ENCODE measurements at regions of chr2 and their contacts with region 1.

Region 1: GRCh38 chr2:135863233-135863632 is 13.0 kb downstream of the MCM6 start:
- DNase-seq: no peak
- H3K4me3 ChIP-seq: no peak overlapping the region
- H3K27ac ChIP-seq: no peak overlapping the region
- H3K4me1 ChIP-seq: no peaks in the 10 kb centered on the region
- CTCF ChIP-seq: no peak

Region 2: DNA sequence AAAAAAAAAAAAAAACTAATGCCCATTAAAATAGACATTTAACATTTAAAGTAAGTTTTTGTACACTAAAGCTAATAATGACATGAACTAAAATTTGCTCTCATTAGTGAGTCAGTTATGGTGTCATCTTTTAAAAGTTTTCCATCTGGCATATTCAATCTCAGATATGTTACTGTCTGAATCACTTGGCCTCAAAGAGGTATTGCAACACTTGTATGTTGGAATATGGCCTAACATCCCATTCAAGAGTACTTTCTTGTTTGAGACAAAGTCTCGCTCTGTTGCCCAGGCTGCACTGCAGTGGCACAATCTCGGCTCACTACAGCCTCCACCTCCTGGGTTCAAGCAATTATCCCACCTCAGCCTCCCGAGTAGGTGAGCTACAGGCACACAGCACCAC is 1314.1 kb before region 1 on chr2:
- CTCF ChIA-PET with region 1: no interaction called
- POLR2A ChIA-PET with region 1: no interaction called
- intact Hi-C with region 1: no loop called
- DNase-seq: no peak
- H3K4me3 ChIP-seq: no peak overlapping the region
- H3K27ac ChIP-seq: no peak overlapping the region
- H3K4me1 ChIP-seq: no peaks in the 10 kb centered on the region
- CTCF ChIP-seq: no peak

Region 3: GRCh38 chr2:135732561-135732960 is 130.7 kb before region 1 on chr2:
- CTCF ChIA-PET with region 1: no interaction called
- POLR2A ChIA-PET with region 1: no interaction called
- intact Hi-C with region 1: no loop called
- DNase-seq: no peak
- H3K4me3 ChIP-seq: no peak overlapping the region
- H3K27ac ChIP-seq: no peak overlapping the region
- H3K4me1 ChIP-seq: no peaks in the 10 kb centered on the region
- CTCF ChIP-seq: no peak

Region 4: DNA sequence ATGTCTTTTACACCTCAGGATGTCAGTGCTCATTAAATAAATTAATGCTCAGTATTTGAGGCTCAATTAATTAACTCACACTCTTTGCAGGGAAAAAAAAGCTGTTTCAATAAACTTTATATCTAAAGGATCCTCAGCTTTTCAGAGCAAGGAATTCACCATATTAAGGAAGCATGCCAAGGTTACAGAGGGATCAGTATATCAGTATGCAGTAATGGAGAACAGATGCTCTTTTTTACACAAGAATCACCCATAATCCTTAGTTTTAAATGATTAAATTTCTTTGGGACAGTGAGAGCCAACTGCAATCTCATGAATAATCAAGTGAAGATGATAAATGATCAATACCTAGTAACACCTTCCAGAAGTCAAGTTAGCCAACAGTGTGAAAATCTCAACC is 11.4 kb before region 1 on chr2:
- CTCF ChIA-PET with region 1: no interaction called
- POLR2A ChIA-PET with region 1: interaction called, 4 read pairs
- intact Hi-C with region 1: loop called (anchors 2 kb)
- DNase-seq: no peak
- H3K4me3 ChIP-seq: no peak overlapping the region
- H3K27ac ChIP-seq: no peak overlapping the region
- H3K4me1 ChIP-seq: no peaks in the 10 kb centered on the region
- CTCF ChIP-seq: no peak